ENCODE measurements at regions of chr20 and their contacts with region 1.

Region 1: GRCh38 chr20:48620519-48621254 is 207.1 kb downstream of the PREX1 start:
- DNase-seq: no peak
- H3K4me3 ChIP-seq: peak overlapping the region; percentile 42
- H3K27ac ChIP-seq: no peak overlapping the region
- H3K27me3 ChIP-seq: peaks cover 5% of the 10 kb centered on the region
- CTCF ChIP-seq: peak; percentile 97

Region 2: GRCh38 chr20:47648943-47649342 is 971.7 kb before region 1 on chr20:
- CTCF ChIA-PET with region 1: interaction called, 12 read pairs
- POLR2A ChIA-PET with region 1: no interaction called
- DNase-seq: no peak
- H3K4me3 ChIP-seq: no peak overlapping the region
- H3K27ac ChIP-seq: no peak overlapping the region
- H3K27me3 ChIP-seq: no peaks in the 10 kb centered on the region
- CTCF ChIP-seq: no peak

Region 3: DNA sequence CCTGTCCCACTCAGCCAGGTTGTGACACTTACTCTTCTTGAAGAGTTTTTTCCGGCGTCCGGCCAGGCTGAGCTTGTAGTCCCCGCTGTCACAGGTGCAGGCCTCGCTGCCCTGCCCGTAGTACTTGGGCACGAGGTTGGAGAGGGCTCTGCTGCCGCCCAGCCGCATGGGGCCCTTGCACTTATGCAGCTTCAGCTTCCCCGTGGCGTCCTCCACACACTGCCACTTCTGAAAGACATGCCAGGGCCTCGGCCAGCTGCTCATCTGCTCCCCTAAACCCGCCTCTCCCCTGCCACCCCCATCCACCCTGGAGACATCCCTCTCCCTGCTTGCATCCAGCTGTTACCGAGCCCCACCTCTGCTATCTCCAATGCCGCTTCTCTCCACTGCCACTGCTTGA is 948.5 kb before region 1 on chr20:
- CTCF ChIA-PET with region 1: interaction called, 142 read pairs
- POLR2A ChIA-PET with region 1: no interaction called
- DNase-seq: no peak
- H3K4me3 ChIP-seq: no peak overlapping the region
- H3K27ac ChIP-seq: no peak overlapping the region
- H3K27me3 ChIP-seq: peaks cover 13% of the 10 kb centered on the region
- CTCF ChIP-seq: no peak

Region 4: DNA sequence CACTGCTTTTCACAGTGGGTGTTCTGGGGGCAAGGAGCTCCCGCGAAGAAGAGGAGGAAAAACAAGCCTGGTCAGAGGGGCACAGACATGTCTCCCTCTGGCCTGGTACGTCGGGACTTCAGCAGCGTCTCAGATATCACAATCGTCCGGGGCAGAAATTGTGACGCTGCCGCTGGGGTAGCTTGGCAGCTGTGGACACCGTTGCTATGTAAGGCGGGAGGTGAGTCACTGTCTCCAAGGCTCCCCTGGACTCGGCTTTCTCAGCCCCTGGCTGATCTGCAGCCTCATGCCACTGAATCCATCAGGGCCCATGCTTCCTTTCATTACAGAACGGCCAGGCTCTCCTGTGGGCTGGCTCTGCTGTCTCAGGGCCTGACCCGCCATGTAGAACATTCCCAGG is 934.1 kb before region 1 on chr20:
- CTCF ChIA-PET with region 1: interaction called, 142 read pairs
- POLR2A ChIA-PET with region 1: no interaction called
- DNase-seq: peak; percentile 23
- H3K4me3 ChIP-seq: no peak overlapping the region
- H3K27ac ChIP-seq: no peak overlapping the region
- H3K27me3 ChIP-seq: peaks cover 3% of the 10 kb centered on the region
- CTCF ChIP-seq: no peak

Region 5: DNA sequence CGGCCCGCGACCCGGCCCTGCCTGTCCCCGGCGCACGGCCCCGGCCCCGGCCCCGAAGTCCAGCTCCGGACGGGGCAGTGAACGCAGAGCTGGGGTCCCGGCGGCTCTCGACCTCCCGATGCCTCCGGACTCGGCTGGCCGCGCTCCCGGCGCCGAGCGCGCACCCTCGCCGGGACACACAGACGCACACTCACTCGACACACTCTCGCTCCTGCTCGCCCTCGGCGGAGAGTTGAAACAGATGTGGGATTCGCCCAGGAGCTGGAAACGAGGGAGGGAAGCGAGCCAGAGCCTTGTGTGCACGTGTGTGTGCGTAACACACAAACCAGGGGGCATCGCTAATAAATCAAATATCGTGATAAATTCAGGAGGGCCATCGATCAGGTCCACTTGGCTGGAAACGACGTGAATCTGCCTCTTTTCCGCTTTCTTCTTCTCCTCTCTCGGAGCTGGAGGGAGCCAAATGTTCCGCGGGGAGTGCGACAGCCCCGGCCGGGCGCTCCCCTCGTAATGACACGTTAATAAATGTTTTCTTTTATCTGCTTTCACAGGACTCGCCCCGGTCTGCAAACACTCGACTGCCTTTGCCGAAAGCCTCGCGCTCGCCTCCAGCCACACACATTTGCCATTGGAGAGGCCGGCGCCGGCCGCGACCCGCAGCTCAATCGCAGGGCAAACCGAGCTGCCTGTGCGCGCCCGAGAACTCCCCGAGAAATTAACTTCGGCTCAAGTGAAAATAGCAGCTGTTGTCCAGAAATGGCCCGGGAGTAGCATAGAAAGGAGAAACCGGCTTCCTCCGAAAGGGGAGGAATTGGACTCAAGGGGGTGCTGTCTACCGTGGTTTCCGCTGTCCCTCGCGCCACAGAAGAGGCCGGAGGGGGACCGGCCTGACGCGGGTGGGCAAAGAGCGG is 834.6 kb before region 1 on chr20:
- CTCF ChIA-PET with region 1: interaction called, 57 read pairs
- POLR2A ChIA-PET with region 1: no interaction called
- DNase-seq: no peak
- H3K4me3 ChIP-seq: peak overlapping the region; percentile 31
- H3K27ac ChIP-seq: no peak overlapping the region
- H3K27me3 ChIP-seq: peaks cover 70% of the 10 kb centered on the region
- CTCF ChIP-seq: peak; percentile 59